ENCODE measurements at regions of chr3 and their contacts with region 1.

Region 1: GRCh38 chr3:133426721-133427120 is 26.9 kb downstream of the BFSP2 start:
- DNase-seq: no peak
- H3K4me3 Mint-ChIP-seq: no peak overlapping the region
- H3K27ac Mint-ChIP-seq: no peak overlapping the region
- H3K4me1 Mint-ChIP-seq: peaks cover 4% of the 10 kb centered on the region
- H3K27me3 Mint-ChIP-seq: no peaks in the 10 kb centered on the region

Region 2: DNA sequence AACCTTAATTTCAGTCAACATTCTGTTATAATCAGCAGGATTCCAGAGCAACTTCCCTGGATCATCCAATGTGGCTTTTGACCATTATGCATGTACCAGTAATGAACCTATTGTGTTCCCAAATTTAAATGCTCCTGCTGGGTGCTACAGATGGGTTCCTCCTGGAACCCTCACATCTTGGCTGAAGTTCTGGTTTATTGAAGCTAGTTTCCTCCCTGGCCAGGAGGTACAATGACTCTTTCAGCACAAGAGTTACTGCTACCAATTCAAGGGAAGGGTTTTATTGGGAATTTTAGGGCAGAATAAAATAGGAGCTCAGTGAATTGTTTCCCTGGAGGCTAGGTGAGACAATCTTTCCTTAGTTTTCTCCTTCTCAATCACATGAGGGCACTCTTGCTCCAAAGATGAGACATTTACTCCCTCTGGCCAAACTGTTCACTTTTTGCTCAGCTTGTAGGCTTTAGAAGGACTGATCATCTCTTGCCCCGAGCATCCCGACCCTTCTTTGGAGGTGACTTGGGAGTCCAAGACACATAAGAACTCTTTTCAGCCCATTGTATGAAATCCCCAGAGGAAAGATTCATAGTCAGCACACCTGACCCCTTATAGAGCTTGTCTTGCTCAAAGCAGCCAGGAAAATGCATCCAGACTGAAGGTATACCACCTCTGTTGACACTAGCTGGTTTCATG is 695.7 kb before region 1 on chr3:
- CTCF ChIA-PET with region 1: interaction called, 21 read pairs
- intact Hi-C with region 1: loop called (anchors 1 kb)
- DNase-seq: no peak
- H3K4me3 Mint-ChIP-seq: no peak overlapping the region
- H3K27ac Mint-ChIP-seq: no peak overlapping the region
- H3K4me1 Mint-ChIP-seq: no peaks in the 10 kb centered on the region
- H3K27me3 Mint-ChIP-seq: peaks cover 20% of the 10 kb centered on the region

Region 3: GRCh38 chr3:133169331-133170068 is 257.2 kb before region 1 on chr3:
- CTCF ChIA-PET with region 1: no interaction called
- intact Hi-C with region 1: no loop called
- DNase-seq: no peak
- H3K4me3 Mint-ChIP-seq: no peak overlapping the region
- H3K27ac Mint-ChIP-seq: no peak overlapping the region
- H3K4me1 Mint-ChIP-seq: no peaks in the 10 kb centered on the region
- H3K27me3 Mint-ChIP-seq: peaks cover 9% of the 10 kb centered on the region

Region 4: GRCh38 chr3:133384331-133385027 is 42.2 kb before region 1 on chr3:
- CTCF ChIA-PET with region 1: interaction called, 4 read pairs
- intact Hi-C with region 1: loop called (anchors 5 kb)
- DNase-seq: peak; percentile 65
- H3K4me3 Mint-ChIP-seq: no peak overlapping the region
- H3K27ac Mint-ChIP-seq: no peak overlapping the region
- H3K4me1 Mint-ChIP-seq: no peaks in the 10 kb centered on the region
- H3K27me3 Mint-ChIP-seq: no peaks in the 10 kb centered on the region

Region 5: DNA sequence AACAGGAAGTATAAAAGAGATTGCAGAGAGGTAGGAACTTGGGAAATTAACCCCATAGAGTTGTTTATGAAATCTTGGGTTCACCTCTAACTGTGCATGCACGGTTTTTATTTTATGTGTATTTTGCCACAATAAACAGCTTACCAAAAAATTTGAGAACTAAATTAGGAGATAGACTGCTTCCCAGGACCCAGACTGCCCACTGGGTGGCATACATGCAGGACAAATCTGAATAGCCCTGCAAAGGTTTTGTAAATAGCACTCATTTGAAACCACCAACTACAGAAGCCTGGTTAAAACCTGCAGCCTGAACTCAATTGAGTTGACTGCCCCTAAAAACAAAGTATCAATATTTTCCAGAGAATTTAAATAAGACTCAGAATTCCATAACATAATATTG is 699.4 kb after region 1 on chr3:
- CTCF ChIA-PET with region 1: no interaction called
- intact Hi-C with region 1: no loop called
- DNase-seq: no peak
- H3K4me3 Mint-ChIP-seq: no peak overlapping the region
- H3K27ac Mint-ChIP-seq: no peak overlapping the region
- H3K4me1 Mint-ChIP-seq: no peaks in the 10 kb centered on the region
- H3K27me3 Mint-ChIP-seq: no peaks in the 10 kb centered on the region